H1 (cell line): ENCODE measurements at regions of chr10 and their contacts with region 1.

Region 1: GRCh38 chr10:119616882-119617570 is 20.3 kb upstream of the TIAL1 start:
- DNase-seq: peak in 1 of 2 experiments; percentile 64
- H3K4me3 ChIP-seq: no peak overlapping the region
- H3K27ac ChIP-seq: no peak overlapping the region
- H3K4me1 ChIP-seq: no peaks in the 10 kb centered on the region; a peak in 2 of 7 replicates
- H3K27me3 ChIP-seq: no peaks in the 10 kb centered on the region
- CTCF ChIP-seq: peak; percentile 48 to 54 (median 53); a peak in 3 of 4 replicates
- EP300 ChIP-seq: no peak
- POLR2A ChIP-seq: no peak
- RAD21 ChIP-seq: peak; percentile 31 to 51; a peak in 3 of 4 replicates

Region 2: GRCh38 chr10:119535305-119535704 is 81.7 kb before region 1 on chr10:
- CTCF ChIA-PET with region 1: no interaction called
- POLR2A ChIA-PET with region 1: no interaction called
- DNase-seq: no peak
- H3K4me3 ChIP-seq: no peak overlapping the region
- H3K27ac ChIP-seq: no peak overlapping the region
- H3K4me1 ChIP-seq: peaks cover 0 to 3% (median 0%) of the 10 kb centered on the region in 4 experiments; a peak in 1 of 7 replicates
- H3K27me3 ChIP-seq: peaks cover 0 to 6% (median under 1%) of the 10 kb centered on the region in 4 experiments; a peak in 3 of 7 replicates
- CTCF ChIP-seq: no peak
- EP300 ChIP-seq: no peak
- POLR2A ChIP-seq: no peak
- RAD21 ChIP-seq: no peak

Region 3: GRCh38 chr10:119602241-119603095 is 14.6 kb before region 1 on chr10:
- CTCF ChIA-PET with region 1: interaction called, 11 read pairs
- POLR2A ChIA-PET with region 1: interaction called, 5 read pairs
- DNase-seq: peak in 1 of 2 experiments; percentile 64
- H3K4me3 ChIP-seq: no peak overlapping the region
- H3K27ac ChIP-seq: no peak overlapping the region
- H3K4me1 ChIP-seq: peaks cover 0 to 5% (median 1%) of the 10 kb centered on the region in 4 experiments; a peak in 2 of 7 replicates
- H3K27me3 ChIP-seq: no peaks in the 10 kb centered on the region
- CTCF ChIP-seq: peak; percentile 70 to 84 (median 73)
- EP300 ChIP-seq: no peak
- POLR2A ChIP-seq: no peak
- RAD21 ChIP-seq: peak; percentile 54 to 66